ENCODE measurements at regions of chr11 and their contacts with region 1.

Region 1: DNA sequence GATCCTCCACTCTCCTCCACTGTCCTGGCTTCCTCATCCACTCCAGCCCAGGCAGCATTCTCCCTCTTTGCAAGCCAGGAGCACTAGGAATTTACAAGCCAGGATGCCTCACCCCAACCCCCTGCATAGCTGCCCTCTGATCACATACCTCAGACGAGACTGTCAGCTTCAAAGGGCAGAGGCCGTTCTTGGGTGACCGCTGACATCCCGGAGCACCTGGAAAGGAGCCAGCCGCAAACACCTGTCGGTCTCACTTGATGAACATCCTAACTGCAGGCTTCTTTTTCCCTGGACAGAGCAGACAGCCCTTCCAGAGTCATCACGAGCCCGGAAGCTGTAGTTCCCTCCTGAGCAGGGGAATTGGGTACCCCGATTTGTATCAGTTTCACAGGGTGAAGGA is 451.3 kb upstream of the B3GAT1 start:
- DNase-seq: no peak
- H3K4me3 ChIP-seq: no peak overlapping the region
- H3K27me3 ChIP-seq: no peaks in the 10 kb centered on the region
- CTCF ChIP-seq: no peak

Region 2: GRCh38 chr11:134882141-134882540 is 18.8 kb after region 1 on chr11:
- CTCF ChIA-PET with region 1: interaction called, 12 read pairs
- POLR2A ChIA-PET with region 1: no interaction called
- DNase-seq: no peak
- H3K4me3 ChIP-seq: no peak overlapping the region
- H3K27me3 ChIP-seq: no peaks in the 10 kb centered on the region
- CTCF ChIP-seq: no peak

Measured in BJ (cell line).